Common myeloid progenitor, CD34-positive (primary cell): ENCODE measurements at regions of chr13 and their contacts with region 1.

Region 1: DNA sequence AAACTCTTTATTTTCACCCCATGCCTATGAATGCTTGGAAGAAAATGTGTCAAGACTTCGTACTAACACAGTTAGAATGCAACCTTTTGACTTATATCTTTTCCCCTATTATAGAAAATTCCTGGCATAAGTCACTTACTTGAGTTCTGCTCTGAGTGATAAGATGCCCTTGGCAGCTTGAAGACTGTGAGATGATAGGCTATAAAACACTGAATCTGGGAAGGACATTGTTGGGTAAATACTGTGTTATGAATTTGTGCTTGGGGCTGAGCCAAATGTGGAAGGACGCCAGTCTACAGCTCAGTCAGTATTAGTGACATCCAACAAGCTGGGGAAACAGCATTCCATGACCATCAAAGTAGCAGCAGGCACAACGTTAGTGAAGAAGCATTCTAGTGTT is 368.0 kb upstream of the SGCG start:
- DNase-seq: peak in 1 of 3 donors; percentile 2
- H3K4me3 ChIP-seq: no peak overlapping the region
- H3K27ac ChIP-seq: no peak overlapping the region
- H3K4me1 ChIP-seq: peaks cover 0 to 5% (median 0%) of the 10 kb centered on the region in 4 experiments
- H3K27me3 ChIP-seq: no peaks in the 10 kb centered on the region

Region 2: GRCh38 chr13:22801402-22802003 is 11.3 kb before region 1 on chr13:
- CTCF ChIA-PET with region 1: no interaction called
- POLR2A ChIA-PET with region 1: interaction called, 10 read pairs
- DNase-seq: peak; percentile 24 to 54 (median 46)
- H3K4me3 ChIP-seq: no peak overlapping the region
- H3K27ac ChIP-seq: no peak overlapping the region
- H3K4me1 ChIP-seq: no peaks in the 10 kb centered on the region
- H3K27me3 ChIP-seq: peaks cover 0 to 7% (median 0%) of the 10 kb centered on the region in 5 experiments

Region 3: DNA sequence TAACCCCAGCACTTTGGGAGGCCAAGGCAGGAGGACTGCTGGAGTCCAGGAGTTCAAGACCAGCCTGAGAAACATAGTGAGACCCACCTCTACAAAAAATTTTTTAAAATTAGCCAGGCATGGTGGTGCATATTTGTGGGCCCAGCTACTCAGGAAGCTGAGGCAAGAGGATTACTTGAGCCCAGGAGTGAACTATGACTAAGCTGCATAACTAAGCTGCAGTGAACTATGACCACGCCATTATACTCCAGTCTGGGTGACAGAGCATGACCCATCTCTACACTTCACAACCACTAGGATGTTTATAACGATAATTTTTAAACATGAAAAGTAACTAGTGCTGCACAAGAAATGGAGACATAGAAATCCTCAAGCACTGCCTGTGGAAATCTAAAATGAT is 15.3 kb after region 1 on chr13:
- CTCF ChIA-PET with region 1: no interaction called
- POLR2A ChIA-PET with region 1: no interaction called
- DNase-seq: no peak
- H3K4me3 ChIP-seq: no peak overlapping the region
- H3K27ac ChIP-seq: no peak overlapping the region
- H3K4me1 ChIP-seq: no peaks in the 10 kb centered on the region
- H3K27me3 ChIP-seq: no peaks in the 10 kb centered on the region

Region 4: DNA sequence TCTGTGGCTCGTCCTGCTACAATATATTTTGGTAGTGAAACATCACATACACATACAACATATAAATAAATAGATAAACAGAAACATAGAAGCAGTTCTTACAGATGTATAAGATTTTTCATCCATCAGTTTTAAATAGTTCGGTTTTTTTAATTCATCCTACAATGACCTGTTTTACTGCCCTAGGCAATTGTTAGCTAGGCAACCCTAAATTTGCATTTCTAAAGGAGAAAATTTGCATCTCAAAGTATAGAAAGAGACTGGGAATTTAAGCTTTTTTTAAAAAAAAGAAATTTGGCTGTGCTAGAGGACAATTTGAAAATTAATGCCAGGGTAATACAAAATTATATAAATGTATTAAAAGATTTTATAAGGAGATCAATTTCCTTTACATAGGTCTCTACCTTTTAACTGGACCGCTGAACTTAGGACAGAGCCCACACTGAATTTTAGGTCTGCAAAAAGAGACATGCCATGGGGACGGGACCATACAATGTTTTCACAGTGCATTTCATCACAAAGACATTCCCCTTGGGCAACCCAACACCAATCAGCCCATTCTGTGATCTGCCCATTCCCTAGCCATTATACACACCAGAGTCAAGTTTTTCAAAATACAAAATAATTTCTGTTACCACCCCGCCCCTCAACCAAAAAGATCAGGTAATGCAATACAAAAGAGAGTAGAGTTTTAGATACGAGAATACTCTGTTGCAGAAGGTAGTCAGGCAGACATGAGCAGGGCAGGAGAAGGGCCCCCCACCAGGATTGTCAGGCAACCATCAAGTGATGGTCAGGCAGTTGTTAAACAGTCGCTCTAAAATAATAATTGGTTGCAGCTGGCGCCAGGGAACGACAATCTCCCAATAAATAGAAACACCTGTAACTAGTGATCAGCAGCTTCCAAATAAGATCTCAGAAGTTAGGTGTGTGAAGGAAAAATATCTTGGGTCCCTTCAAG is 68.2 kb after region 1 on chr13:
- CTCF ChIA-PET with region 1: no interaction called
- POLR2A ChIA-PET with region 1: no interaction called
- DNase-seq: no peak
- H3K4me3 ChIP-seq: no peak overlapping the region
- H3K27ac ChIP-seq: no peak overlapping the region
- H3K4me1 ChIP-seq: peaks cover 0 to 3% (median 0%) of the 10 kb centered on the region in 4 experiments
- H3K27me3 ChIP-seq: no peaks in the 10 kb centered on the region